ENCODE measurements at regions of chr14 and their contacts with region 1.

Region 1: DNA sequence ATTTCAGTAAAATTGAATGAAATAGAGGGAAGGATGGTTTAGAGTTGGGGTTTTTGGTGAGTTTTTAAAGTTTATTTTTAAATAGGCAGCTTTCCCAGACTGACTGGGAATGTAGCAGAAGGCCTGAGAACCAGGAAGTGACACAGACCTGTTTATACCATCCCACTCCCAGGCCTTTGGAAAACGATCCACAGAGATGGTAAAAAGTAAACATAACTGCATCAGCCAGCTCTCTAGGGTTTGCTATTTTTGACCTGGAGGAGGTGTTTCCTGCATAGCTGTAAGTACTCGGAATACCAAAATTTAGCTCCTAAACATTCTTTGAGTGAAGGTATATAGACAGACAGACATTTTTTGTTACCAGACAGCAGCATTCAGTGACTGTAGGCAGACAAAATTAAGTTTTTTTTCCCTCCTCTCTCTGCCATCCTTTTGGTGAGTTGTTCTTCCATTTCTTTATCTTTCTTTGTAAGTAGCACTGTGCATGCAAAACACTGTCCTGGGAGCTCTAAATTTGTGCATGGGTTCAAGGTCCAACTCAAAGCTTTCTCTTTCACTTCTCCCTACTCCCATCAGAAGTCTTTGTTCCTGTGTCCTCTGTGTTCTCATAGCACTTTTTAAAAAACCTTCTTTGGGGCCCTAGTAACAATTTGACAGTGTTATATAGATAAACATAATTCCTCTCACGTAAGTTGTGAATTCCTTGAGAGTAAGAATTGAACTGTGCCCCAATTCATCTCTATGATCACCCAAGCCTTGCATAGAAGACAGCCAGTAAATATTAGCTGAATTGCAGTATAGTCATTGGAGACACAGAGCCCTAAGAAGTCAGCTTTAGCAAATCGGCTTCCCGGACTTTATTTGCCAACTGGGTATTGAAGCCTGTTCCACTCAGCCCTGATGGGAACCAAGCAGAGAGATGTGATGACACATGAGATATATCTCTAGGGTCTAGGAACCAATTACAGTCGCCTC is 37.4 kb downstream of the SUSD6 start:
- DNase-seq: no peak
- ATAC-seq: no peak
- H3K4me3 ChIP-seq: no peak overlapping the region
- H3K4me3 Mint-ChIP-seq: peak overlapping the region; percentile 10
- H3K27ac ChIP-seq: peak overlapping the region; percentile 5 to 93
- H3K27ac Mint-ChIP-seq: peak overlapping the region; percentile 86
- H3K4me1 ChIP-seq: peaks cover 86 to 87% of the 10 kb centered on the region in 2 donors
- H3K4me1 Mint-ChIP-seq: peaks cover 92% of the 10 kb centered on the region
- H3K27me3 ChIP-seq: no peaks in the 10 kb centered on the region
- H3K27me3 Mint-ChIP-seq: no peaks in the 10 kb centered on the region
- CTCF ChIP-seq: no peak

Region 2: DNA sequence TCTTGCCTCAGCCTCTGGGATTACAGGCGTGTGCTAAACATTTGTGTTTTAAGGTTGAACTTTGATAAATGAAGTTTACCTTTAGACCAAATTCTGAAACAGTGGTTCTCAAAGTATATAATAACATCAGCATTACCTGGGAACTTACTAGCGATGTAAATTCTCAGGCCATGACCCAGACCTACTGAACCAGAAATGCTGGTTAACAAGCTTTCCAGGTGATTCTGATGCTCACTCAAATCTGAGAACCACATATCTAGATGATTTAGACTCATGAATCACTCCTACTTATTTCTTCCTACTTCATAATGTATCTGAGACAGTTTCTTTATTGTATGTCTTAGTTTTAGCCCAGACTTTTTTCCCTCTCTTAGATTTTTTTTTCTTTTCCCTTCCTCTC is 1785.5 kb before region 1 on chr14:
- CTCF ChIA-PET with region 1: no interaction called
- POLR2A ChIA-PET with region 1: no interaction called
- intact Hi-C with region 1: no loop called
- DNase-seq: no peak
- ATAC-seq: no peak
- H3K4me3 ChIP-seq: no peak overlapping the region
- H3K4me3 Mint-ChIP-seq: no peak overlapping the region
- H3K27ac ChIP-seq: no peak overlapping the region
- H3K27ac Mint-ChIP-seq: no peak overlapping the region
- H3K4me1 ChIP-seq: no peaks in the 10 kb centered on the region
- H3K4me1 Mint-ChIP-seq: no peaks in the 10 kb centered on the region
- H3K27me3 ChIP-seq: no peaks in the 10 kb centered on the region
- H3K27me3 Mint-ChIP-seq: no peaks in the 10 kb centered on the region
- CTCF ChIP-seq: no peak

Region 3: GRCh38 chr14:69637503-69638030 is 11.2 kb before region 1 on chr14:
- CTCF ChIA-PET with region 1: interaction called, 7 read pairs
- POLR2A ChIA-PET with region 1: interaction called, 9 read pairs
- intact Hi-C with region 1: loop called (anchors 2 kb)
- DNase-seq: no peak
- ATAC-seq: peak; percentile 19
- H3K4me3 ChIP-seq: peak overlapping the region in 1 of 5 experiments; percentile 9
- H3K4me3 Mint-ChIP-seq: peak overlapping the region; percentile 84
- H3K27ac ChIP-seq: peak overlapping the region; percentile 72 to 78
- H3K27ac Mint-ChIP-seq: peak overlapping the region; percentile 96
- H3K4me1 ChIP-seq: peaks cover 76 to 78% of the 10 kb centered on the region in 2 donors
- H3K4me1 Mint-ChIP-seq: peaks cover 88% of the 10 kb centered on the region
- H3K27me3 ChIP-seq: no peaks in the 10 kb centered on the region
- H3K27me3 Mint-ChIP-seq: no peaks in the 10 kb centered on the region
- CTCF ChIP-seq: no peak

Region 4: GRCh38 chr14:69695322-69696203 is 46.8 kb after region 1 on chr14:
- CTCF ChIA-PET with region 1: no interaction called
- POLR2A ChIA-PET with region 1: no interaction called
- intact Hi-C with region 1: loop called (anchors 5 kb)
- DNase-seq: peak; percentile 54
- ATAC-seq: peak; percentile 46
- H3K4me3 ChIP-seq: peak overlapping the region in 1 of 5 experiments; percentile 26
- H3K4me3 Mint-ChIP-seq: peak overlapping the region; percentile 70
- H3K27ac ChIP-seq: peak overlapping the region; percentile 45 to 71
- H3K27ac Mint-ChIP-seq: peak overlapping the region; percentile 90
- H3K4me1 ChIP-seq: peaks cover 75 to 76% of the 10 kb centered on the region in 2 donors
- H3K4me1 Mint-ChIP-seq: peaks cover 94% of the 10 kb centered on the region
- H3K27me3 ChIP-seq: no peaks in the 10 kb centered on the region
- H3K27me3 Mint-ChIP-seq: no peaks in the 10 kb centered on the region
- CTCF ChIP-seq: no peak

Region 5: DNA sequence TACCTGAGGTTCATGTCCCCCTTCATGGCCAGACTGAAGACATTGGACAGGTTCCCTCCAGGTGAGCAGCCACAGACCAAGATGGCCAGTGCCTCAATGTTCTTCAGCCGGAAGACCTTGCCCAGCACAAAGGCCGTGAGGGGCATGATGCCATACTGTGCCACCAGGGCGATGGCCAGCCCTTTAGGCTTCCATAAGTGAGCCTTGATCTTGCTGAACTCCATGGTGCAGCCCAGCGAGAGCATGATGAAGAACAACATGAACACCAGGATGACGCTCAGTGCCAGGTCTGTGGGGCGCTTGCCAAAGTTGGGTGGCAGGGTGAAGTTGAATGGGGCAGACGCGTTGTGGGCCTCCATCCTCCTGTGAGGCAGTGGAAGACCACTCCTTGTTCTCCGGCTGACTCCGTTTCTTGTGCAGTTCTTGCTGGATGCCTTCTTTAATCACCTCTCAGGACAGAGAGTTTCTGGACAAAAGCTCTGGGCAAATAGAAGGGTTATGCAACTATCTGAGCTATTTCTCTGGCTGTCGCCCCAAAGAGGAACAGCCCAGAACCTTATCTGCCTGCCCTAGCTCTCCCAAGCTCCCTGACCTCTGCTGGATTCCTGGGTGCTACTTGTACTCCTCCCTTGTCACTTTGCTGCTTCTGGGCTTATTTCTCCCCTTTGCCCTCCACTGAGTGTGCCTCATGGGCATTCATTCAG is 148.2 kb after region 1 on chr14 and contains the start of gene SLC10A1:
- CTCF ChIA-PET with region 1: no interaction called
- POLR2A ChIA-PET with region 1: no interaction called
- intact Hi-C with region 1: no loop called
- DNase-seq: no peak
- ATAC-seq: no peak
- H3K4me3 ChIP-seq: no peak within 1 kb of the TSS
- H3K4me3 Mint-ChIP-seq: no peak within 1 kb of the TSS
- H3K27ac ChIP-seq: no peak within 1 kb of the TSS
- H3K27ac Mint-ChIP-seq: no peak within 1 kb of the TSS
- H3K4me1 ChIP-seq: no peaks in the 10 kb centered on the region
- H3K4me1 Mint-ChIP-seq: no peaks in the 10 kb centered on the region
- H3K27me3 ChIP-seq: no peaks in the 10 kb centered on the region
- H3K27me3 Mint-ChIP-seq: peaks cover 19% of the 10 kb centered on the region
- CTCF ChIP-seq: no peak
- total RNA-seq, gene SLC10A1: not detected in 2 replicates

Measured in B cell (primary cell).